A549 (cell line): ENCODE measurements at regions of chr10 and their contacts with region 1.

Region 1: DNA sequence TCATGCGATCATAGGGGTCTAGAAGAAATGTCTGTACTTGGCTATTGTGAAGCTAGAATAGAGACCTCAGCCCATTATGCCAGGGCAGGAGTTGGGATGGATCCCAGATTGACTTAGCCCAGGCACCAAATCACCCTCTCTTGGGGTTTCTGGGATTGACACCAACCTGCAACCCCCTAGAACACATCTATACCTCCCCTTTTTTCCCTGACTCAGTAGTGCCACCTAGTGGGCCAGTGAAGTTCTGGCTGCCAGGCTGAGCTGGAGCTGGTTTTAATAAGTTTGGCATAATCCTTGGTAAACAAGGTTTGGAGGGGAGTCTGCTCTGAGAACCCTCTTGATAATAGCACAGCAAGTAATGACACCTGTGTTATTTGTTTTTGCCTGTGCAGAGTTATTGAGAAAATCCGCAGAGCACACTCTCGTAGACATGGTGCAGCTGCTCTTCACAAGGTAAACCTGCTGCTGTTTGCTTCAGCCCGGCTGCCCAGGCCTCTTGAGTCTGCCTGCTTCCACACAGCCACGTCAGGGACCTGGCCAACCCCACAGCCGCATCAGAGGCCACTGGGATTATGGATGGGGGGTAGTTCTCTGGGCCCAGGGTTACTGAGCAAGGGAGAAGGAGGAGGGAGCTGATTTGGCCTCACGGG is 43.3 kb upstream of the NFKB2 start:
- DNase-seq: peak; percentile 68
- ATAC-seq: peak; percentile 72 to 89; a peak in 5 of 6 replicates
- H3K4me3 ChIP-seq: no peak overlapping the region
- H3K27ac ChIP-seq: no peak overlapping the region
- H3K4me1 ChIP-seq: no peaks in the 10 kb centered on the region
- CTCF ChIP-seq: peak; percentile 93
- EP300 ChIP-seq: no peak
- POLR2A ChIP-seq: no peak
- RAD21 ChIP-seq: peak; percentile 75 to 80

Region 2: GRCh38 chr10:102254426-102254825 is 97.8 kb before region 1 on chr10:
- CTCF ChIA-PET with region 1: interaction called, 16 read pairs
- POLR2A ChIA-PET with region 1: no interaction called
- DNase-seq: no peak
- ATAC-seq: no peak
- H3K4me3 ChIP-seq: no peak overlapping the region
- H3K27ac ChIP-seq: no peak overlapping the region
- H3K4me1 ChIP-seq: no peaks in the 10 kb centered on the region
- CTCF ChIP-seq: no peak
- EP300 ChIP-seq: no peak
- POLR2A ChIP-seq: no peak
- RAD21 ChIP-seq: no peak

Region 3: DNA sequence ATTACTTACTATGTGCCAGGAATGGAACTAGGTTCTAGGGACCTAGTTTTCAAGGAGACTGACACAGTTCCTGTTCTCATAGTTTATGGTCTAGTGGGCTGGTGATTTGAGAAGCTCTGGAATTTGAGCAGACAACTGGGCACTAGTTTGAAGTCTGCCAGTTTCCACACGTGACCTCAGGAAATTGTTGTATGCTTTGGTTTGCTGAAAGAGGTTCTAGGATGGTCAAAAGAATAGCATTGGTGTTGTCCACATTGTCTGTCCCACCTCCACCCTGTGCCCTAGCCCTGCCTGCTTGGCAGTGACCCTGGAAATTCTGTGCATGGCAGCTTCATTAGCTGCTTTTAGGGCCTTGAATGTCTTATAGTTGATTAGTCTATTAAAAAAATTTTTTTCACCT is 78.1 kb before region 1 on chr10:
- CTCF ChIA-PET with region 1: interaction called, 29 read pairs
- POLR2A ChIA-PET with region 1: no interaction called
- DNase-seq: no peak
- ATAC-seq: no peak
- H3K4me3 ChIP-seq: no peak overlapping the region
- H3K27ac ChIP-seq: no peak overlapping the region
- H3K4me1 ChIP-seq: no peaks in the 10 kb centered on the region
- CTCF ChIP-seq: no peak
- EP300 ChIP-seq: no peak
- POLR2A ChIP-seq: no peak
- RAD21 ChIP-seq: no peak

Region 4: DNA sequence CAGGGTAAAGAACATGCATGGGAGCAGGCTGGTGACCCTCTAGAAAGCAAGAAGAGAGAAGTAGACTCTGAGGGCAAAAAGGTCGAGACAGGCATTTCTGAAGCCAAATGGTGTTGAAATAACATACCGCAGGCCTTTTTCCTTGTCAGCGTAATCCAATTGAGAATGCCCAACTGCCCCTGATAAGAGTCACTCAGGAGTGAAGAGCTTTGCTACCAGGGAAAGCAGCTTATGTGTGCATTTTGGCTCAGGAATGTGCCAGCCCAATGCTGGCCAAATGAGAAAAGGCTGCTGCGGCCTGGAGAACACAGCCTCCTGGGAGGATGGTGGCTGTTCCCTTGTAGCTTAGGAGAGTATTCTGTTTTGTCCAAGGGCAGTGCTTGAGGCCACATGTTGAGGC is 18.1 kb before region 1 on chr10:
- CTCF ChIA-PET with region 1: interaction called, 36 read pairs
- POLR2A ChIA-PET with region 1: no interaction called
- DNase-seq: no peak
- ATAC-seq: no peak
- H3K4me3 ChIP-seq: no peak overlapping the region
- H3K27ac ChIP-seq: no peak overlapping the region
- H3K4me1 ChIP-seq: no peaks in the 10 kb centered on the region
- CTCF ChIP-seq: no peak
- EP300 ChIP-seq: no peak
- POLR2A ChIP-seq: no peak
- RAD21 ChIP-seq: no peak

Region 5: GRCh38 chr10:102375250-102375649 is 23.1 kb after region 1 on chr10:
- CTCF ChIA-PET with region 1: interaction called, 44 read pairs
- POLR2A ChIA-PET with region 1: no interaction called
- DNase-seq: no peak
- ATAC-seq: peak; percentile 62 to 70; a peak in 4 of 6 replicates
- H3K4me3 ChIP-seq: no peak overlapping the region
- H3K27ac ChIP-seq: no peak overlapping the region
- H3K4me1 ChIP-seq: no peaks in the 10 kb centered on the region
- CTCF ChIP-seq: no peak
- EP300 ChIP-seq: no peak
- POLR2A ChIP-seq: no peak
- RAD21 ChIP-seq: peak in 1 of 2 experiments; percentile 24; a peak in 1 of 5 replicates

Region 6: GRCh38 chr10:102394079-102394800 is 42.0 kb after region 1 on chr10:
- CTCF ChIA-PET with region 1: interaction called, 23 read pairs
- POLR2A ChIA-PET with region 1: no interaction called
- DNase-seq: peak; percentile 95 to 98
- ATAC-seq: peak; percentile 82 to 90
- H3K4me3 ChIP-seq: peak overlapping the region; percentile 56
- H3K27ac ChIP-seq: peak overlapping the region; percentile 68 to 91
- H3K4me1 ChIP-seq: peaks cover 22% of the 10 kb centered on the region; the same call in 2 of the 3 replicates
- CTCF ChIP-seq: peak; percentile 96
- EP300 ChIP-seq: no peak; a peak in 1 of 5 replicates
- POLR2A ChIP-seq: no peak
- RAD21 ChIP-seq: peak in 1 of 2 experiments; percentile 85; a peak in 4 of 5 replicates

Region 7: DNA sequence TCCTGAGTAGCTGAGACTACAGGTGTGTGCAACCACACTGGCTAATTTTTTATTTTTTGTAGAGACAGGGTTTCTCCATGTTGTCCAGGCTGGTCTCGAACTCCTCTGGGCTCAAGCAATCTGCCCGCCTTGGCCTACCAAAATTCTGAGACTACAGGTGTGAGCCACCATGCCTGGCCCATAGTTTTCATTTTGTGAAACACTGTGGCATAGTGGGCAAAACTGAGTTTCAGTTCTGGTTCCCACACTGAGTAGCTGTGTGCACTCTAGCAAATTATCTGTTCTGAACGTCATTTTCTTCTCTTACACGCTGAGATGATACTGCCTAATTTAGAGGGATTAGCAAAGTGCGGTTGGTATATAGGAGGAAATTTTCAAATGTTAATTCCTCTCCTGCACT is 1030.6 kb after region 1 on chr10:
- CTCF ChIA-PET with region 1: no interaction called
- POLR2A ChIA-PET with region 1: no interaction called
- DNase-seq: no peak
- ATAC-seq: no peak
- H3K4me3 ChIP-seq: no peak overlapping the region
- H3K27ac ChIP-seq: no peak overlapping the region
- H3K4me1 ChIP-seq: no peaks in the 10 kb centered on the region
- CTCF ChIP-seq: no peak
- EP300 ChIP-seq: no peak
- POLR2A ChIP-seq: no peak
- RAD21 ChIP-seq: no peak